Aorta (tissue), 5 donors: ENCODE measurements at regions of chr11 and their contacts with region 1.

Region 1: GRCh38 chr11:122108192-122108799 is 7.7 kb downstream of the BLID start:
- DNase-seq: no peak
- ATAC-seq: no peak
- H3K4me3 ChIP-seq: no peak overlapping the region
- H3K27ac ChIP-seq: peak overlapping the region in 1 of 2 donors; percentile 44
- H3K4me1 ChIP-seq: peaks cover 5 to 17% of the 10 kb centered on the region in 2 donors
- H3K27me3 ChIP-seq: no peaks in the 10 kb centered on the region

Region 2: GRCh38 chr11:122093731-122094275 is 14.5 kb before region 1 on chr11:
- intact Hi-C with region 1: loop called in 1 of 2 experiments (anchors 1 kb)
- DNase-seq: no peak
- ATAC-seq: no peak
- H3K4me3 ChIP-seq: peak overlapping the region in 1 of 2 donors; percentile 41
- H3K27ac ChIP-seq: peak overlapping the region; percentile 44 to 96
- H3K4me1 ChIP-seq: peaks cover 4 to 5% of the 10 kb centered on the region in 2 donors
- H3K27me3 ChIP-seq: no peaks in the 10 kb centered on the region

Region 3: DNA sequence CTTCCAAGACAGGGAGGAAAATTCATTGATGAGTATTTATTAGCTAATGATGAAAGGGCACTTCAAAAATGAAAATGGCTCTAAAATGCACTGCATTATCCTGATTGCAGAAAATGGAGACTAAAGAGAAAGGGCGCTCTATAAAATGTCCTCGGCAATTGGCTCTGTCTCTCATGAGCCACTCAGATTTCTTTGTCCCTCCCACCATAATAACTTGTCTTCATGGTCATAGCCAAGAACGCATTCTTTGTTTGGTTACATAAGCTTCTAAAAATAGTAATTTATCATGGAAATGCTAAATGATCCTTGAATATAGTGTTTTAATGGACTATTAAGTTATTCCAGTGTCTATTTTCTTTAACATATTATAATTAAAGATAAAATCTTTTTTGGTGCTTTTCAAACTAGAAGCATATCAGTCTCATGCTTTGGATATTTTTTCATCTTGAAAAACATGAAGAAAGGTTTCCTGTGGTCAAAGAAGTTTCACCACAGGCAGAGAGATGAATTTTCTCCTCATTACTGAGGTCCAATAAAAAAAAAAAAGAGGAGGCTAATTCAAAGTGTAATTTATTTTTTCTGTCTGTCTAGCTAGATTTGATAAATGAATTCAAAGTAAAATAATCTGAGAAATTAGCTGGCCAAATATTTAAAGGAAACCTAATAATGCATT is 245.9 kb after region 1 on chr11:
- intact Hi-C with region 1: loop called in 1 of 2 experiments (anchors 10 kb)
- DNase-seq: no peak
- ATAC-seq: peak; percentile 88
- H3K4me3 ChIP-seq: peak overlapping the region in 1 of 2 donors; percentile 58
- H3K27ac ChIP-seq: peak overlapping the region in 1 of 2 donors; percentile 57
- H3K4me1 ChIP-seq: peaks cover 0 to 8% of the 10 kb centered on the region in 2 donors
- H3K27me3 ChIP-seq: no peaks in the 10 kb centered on the region